Activated naive CD4-positive, alpha-beta T cell treated with anti-CD3 and anti-CD28 coated beads for 36 hours (primary cell): ENCODE measurements at regions of chr2 and their contacts with region 1.

Region 1: GRCh38 chr2:217166241-217166850 is 306.5 kb upstream of the TNP1 start:
- DNase-seq: no peak
- H3K4me3 Mint-ChIP-seq: no peak overlapping the region
- H3K27ac Mint-ChIP-seq: no peak overlapping the region
- H3K4me1 Mint-ChIP-seq: peaks cover 15% of the 10 kb centered on the region
- H3K27me3 Mint-ChIP-seq: peaks cover 10% of the 10 kb centered on the region

Region 2: GRCh38 chr2:216683846-216684507 is 482.4 kb before region 1 on chr2:
- CTCF ChIA-PET with region 1: interaction called, 3 read pairs
- intact Hi-C with region 1: loop called (anchors 2 kb)
- DNase-seq: no peak
- H3K4me3 Mint-ChIP-seq: no peak overlapping the region
- H3K27ac Mint-ChIP-seq: no peak overlapping the region
- H3K4me1 Mint-ChIP-seq: peaks cover 2% of the 10 kb centered on the region
- H3K27me3 Mint-ChIP-seq: peaks cover 27% of the 10 kb centered on the region

Region 3: DNA sequence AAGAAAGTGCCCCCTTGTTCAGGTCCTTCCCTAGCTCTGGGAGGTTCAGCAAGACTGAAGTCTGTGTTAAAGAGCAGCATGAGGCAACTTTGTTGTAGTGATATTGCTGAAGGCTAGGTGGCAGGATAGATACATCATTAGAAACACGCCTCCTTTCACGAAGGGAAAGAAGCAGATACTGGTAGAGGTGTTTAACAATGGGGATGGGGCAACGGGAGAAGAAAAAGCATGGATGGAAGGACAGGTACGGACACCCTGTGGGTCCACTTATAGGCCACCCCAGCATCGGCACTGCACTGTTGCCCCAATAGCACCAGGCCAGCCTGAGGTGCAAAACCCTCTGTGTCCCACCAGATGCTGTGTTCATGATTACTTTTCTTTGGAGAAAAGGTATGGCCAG is 467.5 kb before region 1 on chr2:
- CTCF ChIA-PET with region 1: interaction called, 4 read pairs
- intact Hi-C with region 1: loop called (anchors 2 kb)
- DNase-seq: peak; percentile 27
- H3K4me3 Mint-ChIP-seq: no peak overlapping the region
- H3K27ac Mint-ChIP-seq: no peak overlapping the region
- H3K4me1 Mint-ChIP-seq: peaks cover 8% of the 10 kb centered on the region
- H3K27me3 Mint-ChIP-seq: peaks cover 40% of the 10 kb centered on the region

Region 4: GRCh38 chr2:216777650-216778273 is 388.6 kb before region 1 on chr2:
- CTCF ChIA-PET with region 1: no interaction called
- intact Hi-C with region 1: loop called (anchors 10 kb)
- DNase-seq: peak; percentile 61
- H3K4me3 Mint-ChIP-seq: no peak overlapping the region
- H3K27ac Mint-ChIP-seq: no peak overlapping the region
- H3K4me1 Mint-ChIP-seq: no peaks in the 10 kb centered on the region
- H3K27me3 Mint-ChIP-seq: peaks cover 2% of the 10 kb centered on the region

Region 5: DNA sequence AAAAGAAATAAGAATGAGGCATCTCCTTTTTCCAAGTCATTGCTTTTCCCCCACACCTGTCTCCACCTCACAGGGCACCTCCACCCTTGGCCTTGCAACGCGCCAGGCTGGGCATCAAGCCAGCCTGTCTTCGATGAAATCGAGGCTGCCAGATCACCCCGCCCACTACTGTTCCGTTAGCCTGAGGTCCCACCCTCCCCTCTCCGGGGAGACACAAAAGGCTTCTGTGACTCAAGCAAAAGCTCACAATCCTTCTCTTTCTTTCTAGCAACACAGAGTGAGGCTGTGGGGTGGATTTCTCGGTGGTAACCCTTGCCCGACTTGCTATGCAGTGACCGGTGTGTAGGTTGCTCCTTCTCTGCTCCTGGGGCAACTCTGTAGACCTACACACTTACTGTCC is 316.4 kb before region 1 on chr2:
- CTCF ChIA-PET with region 1: no interaction called
- intact Hi-C with region 1: loop called (anchors 10 kb)
- DNase-seq: peak; percentile 53
- H3K4me3 Mint-ChIP-seq: no peak overlapping the region
- H3K27ac Mint-ChIP-seq: no peak overlapping the region
- H3K4me1 Mint-ChIP-seq: peaks cover 15% of the 10 kb centered on the region
- H3K27me3 Mint-ChIP-seq: no peaks in the 10 kb centered on the region

Region 6: GRCh38 chr2:217182926-217183325 is 16.6 kb after region 1 on chr2:
- CTCF ChIA-PET with region 1: no interaction called
- intact Hi-C with region 1: no loop called
- DNase-seq: no peak
- H3K4me3 Mint-ChIP-seq: no peak overlapping the region
- H3K27ac Mint-ChIP-seq: no peak overlapping the region
- H3K4me1 Mint-ChIP-seq: no peaks in the 10 kb centered on the region
- H3K27me3 Mint-ChIP-seq: no peaks in the 10 kb centered on the region

Region 7: DNA sequence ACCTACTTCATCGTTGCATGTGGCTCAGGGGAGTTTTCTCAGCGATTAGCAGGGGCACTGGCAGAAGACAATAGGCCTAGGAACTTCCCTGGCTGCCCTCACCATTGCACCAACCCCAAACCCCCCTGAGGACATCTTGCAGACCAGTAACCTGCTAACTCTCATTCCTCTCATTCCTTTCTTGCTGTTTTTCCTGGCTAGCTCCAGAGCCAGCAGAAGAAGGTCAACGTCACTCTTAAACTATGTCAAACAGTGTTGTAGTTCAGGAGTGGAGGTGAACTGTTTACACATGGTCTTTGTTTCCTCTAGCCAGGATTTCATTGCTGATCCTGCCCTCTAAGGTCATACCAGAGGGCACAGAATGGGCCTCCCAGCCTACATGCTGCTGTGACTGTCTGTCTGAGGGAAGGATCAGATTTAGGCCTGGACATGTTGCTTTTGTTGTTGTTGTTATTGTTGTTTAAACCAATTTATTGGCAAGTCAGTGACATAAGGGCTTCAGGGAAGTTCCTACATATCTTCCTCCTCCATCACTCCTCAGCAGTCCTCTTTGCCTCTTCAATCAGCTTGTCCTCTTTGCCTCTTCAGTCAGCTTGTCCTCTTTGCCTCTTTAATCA is 165.3 kb after region 1 on chr2:
- CTCF ChIA-PET with region 1: no interaction called
- intact Hi-C with region 1: no loop called
- DNase-seq: no peak
- H3K4me3 Mint-ChIP-seq: no peak overlapping the region
- H3K27ac Mint-ChIP-seq: no peak overlapping the region
- H3K4me1 Mint-ChIP-seq: no peaks in the 10 kb centered on the region
- H3K27me3 Mint-ChIP-seq: no peaks in the 10 kb centered on the region